Right ventricle myocardium inferior (tissue), 1 donor: ENCODE measurements at regions of chr16 and their contacts with region 1.

Region 1: DNA sequence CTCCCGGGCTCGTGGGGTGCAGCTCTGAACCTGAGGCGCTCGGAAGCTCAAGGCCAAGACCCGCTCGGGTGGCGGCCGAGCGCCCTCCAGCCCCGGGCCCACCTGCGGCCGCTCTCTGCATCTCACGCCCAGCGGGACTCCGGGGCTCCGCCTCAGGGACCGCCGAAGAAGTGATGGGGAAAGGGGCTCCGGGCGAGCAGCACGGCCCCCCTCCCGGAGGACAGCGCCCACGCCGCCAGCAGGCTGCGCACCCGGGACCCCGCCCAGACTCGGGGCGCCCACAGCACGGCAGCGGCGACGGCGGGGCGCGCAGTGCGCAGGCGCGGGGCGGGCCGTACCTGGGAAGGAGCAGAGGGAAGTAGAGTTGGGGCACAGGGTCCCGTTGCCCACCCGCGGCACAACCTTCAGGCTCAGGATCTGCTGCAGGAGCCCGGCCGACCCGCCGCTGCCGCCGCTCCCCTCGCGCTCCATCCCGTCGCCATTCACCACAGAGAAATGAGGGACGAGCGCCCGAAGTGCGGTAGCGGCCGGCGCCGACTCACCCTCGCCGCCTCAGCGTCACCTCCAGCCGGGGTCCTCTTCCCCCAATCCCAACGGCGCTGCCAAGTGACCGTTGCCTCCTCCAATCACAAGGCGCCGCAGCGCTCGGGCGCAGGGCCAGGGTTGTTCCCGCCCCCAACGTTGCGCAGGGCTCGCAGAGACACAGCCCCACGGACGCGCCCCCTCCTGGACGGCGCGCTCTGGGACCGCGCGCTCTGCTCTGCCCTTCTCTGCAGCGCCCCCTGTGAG is at the start of gene TMEM170A:
- DNase-seq: peak; percentile 100
- ATAC-seq: peak; percentile 97
- total RNA-seq, gene TMEM170A: 9.6 TPM

Region 2: GRCh38 chr16:75198135-75198600 is 266.2 kb before region 1 on chr16:
- intact Hi-C with region 1: loop called (anchors 2 kb)
- DNase-seq: no peak
- ATAC-seq: peak; percentile 17

Region 3: GRCh38 chr16:75432828-75433731 is 31.2 kb before region 1 on chr16 and contains the start of gene CFDP1:
- intact Hi-C with region 1: loop called (anchors 2 kb)
- DNase-seq: peak; percentile 98
- ATAC-seq: peak; percentile 98
- total RNA-seq, gene CFDP1: 26.6 TPM

Region 4: GRCh38 chr16:75519881-75520280 is 55.6 kb after region 1 on chr16:
- intact Hi-C with region 1: loop called (anchors 2 kb)
- DNase-seq: no peak
- ATAC-seq: no peak

Region 5: DNA sequence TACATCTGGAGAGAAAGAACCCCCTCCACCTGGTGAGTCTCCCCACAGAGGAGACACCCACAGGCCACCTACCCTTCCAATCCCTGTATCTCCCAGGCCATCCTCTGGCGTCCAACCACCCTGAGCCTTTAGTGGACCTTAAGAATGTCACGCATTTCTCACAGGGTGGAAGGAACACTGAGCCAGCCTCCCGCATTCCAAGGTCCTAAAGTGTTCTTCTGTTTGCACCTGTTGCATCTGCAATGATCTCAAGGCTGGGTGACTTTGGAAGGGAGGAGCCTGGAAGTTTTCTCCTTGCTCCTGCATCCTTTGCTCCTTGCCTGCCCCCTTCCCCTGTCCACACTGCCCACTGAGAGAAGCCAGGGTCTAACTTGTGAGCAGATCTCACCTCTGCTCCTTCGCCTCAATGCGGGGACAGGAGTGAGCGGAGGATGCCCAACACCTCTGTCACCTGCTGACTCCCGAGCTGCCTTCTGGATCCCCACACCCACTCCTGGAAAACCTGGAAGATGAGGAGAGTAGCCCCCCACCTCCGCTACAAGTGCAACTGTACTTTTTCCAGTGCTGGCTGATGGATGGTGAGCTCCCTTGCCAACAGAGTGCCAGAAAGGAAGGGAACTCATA is 67.9 kb after region 1 on chr16:
- intact Hi-C with region 1: no loop called
- DNase-seq: no peak
- ATAC-seq: no peak

Region 6: DNA sequence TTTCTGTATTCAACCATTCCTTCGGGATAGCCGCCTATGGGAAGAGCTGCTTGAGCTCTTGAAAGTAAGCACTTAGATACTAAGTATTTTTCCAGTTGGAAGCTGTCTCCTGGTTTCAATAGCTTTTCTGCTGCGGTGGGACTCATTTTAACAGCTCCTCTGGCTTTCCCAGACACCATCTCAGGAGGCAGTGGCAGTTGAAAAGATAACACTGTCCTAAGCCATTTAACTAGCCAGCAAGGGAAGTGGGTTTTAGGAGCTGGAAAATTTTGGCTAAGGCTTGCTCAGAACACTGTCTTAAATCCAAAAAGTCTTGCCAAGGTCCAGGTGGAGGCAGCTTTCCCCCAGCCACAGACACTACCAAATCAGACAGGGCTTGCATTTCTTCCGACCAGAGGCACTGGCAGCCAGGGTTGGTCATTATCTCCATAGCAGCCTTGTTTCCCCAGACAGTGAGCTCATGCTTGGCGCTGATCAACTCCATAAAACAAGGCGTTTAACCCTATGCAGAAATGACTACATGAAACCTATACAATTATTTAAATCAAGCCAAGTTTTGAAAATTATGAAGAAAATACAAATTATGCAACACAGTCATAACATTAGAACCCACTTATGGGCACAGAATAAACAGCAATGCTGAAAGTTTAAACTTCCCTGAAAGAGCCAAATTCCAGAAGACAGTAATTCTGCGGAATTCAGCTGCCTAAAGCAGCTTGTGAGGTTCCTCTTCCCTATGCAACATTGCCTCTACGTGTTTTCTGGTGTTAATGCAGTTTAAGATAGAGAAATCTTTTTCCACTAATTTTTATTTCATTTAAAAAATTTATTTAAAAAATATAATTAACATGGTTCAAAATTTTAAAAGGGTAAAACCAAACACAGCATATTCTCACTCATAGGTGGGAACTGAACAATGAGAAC is 126.9 kb after region 1 on chr16:
- intact Hi-C with region 1: loop called (anchors 2 kb)
- DNase-seq: peak; percentile 72
- ATAC-seq: peak; percentile 94

Region 7: DNA sequence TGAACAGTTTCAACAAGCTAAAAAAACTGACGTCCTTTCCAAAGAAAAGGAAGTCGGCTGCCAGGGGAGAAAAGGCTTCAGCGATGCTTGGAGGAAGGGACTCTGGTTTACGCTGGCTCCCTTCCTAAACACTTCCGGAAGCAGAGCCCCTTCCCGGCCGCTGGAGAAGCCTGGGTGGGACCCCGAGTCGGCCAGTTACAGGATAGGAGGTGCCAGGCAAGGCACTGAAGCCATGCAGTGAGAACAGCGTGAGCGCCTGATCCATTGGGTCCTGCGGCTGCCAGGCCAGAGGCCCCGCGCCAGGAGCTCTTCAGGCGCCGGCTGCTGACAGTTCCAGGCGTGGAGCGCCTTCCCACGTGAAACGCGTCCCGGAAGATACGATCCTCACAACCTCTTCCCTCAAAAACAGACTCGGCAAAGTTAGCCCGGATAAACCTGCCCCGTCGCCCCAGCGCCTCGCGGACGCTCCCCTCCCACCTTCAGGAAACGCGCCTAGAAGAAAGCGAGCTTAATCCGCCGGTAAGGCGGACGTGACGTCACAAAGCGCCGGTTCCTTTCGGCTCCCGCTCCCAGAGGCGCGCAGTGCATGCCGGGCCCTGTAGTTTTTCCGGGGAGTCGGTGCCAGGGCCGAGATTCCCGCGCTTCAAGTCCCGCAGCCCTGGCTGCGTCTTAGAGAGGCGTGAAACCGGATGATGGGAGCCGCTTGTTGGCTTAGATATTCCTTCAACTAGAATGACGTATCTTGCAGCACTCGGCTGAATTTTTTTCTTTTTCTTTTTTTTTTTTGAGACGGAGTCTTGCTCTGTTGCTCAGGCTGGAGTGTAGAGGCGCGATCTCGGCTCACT is 158.7 kb after region 1 on chr16 and contains the start of gene ADAT1:
- intact Hi-C with region 1: loop called (anchors 2 kb)
- DNase-seq: peak; percentile 100
- ATAC-seq: peak; percentile 97
- total RNA-seq, gene ADAT1: 19.5 TPM

Region 8: DNA sequence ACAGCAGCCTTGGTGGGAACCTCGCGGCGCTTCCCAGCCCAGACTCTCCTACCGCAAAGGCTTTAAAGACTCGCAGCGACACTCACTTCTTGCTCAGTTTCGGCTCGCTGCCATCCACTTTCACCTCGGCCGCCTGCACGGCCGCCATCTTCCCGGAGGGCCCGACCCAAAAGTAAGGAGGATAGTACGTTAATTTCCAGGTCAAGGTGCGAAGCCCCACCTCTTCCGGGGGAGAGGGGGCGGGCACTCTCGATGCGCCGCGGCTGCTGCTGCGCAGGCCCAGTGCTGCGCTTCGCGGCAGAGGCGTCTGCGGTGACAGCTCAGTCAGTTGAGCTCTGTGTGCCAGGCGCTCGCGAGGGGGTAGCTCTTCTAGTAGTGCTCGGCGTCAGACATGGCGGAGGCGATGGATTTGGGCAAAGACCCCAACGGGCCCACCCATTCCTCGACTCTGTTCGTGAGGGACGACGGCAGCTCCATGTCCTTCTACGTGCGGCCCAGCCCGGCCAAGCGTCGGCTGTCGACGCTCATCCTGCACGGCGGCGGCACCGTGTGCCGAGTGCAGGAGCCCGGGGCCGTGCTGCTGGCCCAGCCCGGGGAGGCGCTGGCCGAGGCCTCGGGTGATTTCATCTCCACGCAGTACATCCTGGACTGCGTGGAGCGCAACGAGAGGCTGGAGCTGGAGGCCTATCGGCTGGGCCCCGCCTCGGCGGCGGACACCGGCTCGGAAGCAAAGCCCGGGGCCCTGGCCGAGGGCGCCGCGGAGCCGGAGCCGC is 183.4 kb after region 1 on chr16 and contains the starts of genes KARS1 and TERF2IP:
- intact Hi-C with region 1: no loop called
- DNase-seq: peak; percentile 95
- ATAC-seq: peak; percentile 99
- total RNA-seq, gene KARS1: 145 TPM
- total RNA-seq, gene TERF2IP: 51.7 TPM